Endothelial cell of umbilical vein (primary cell): ENCODE measurements at regions of chr4 and their contacts with region 1.

Region 1: GRCh38 chr4:55251342-55251741 is 94.7 kb upstream of the SRD5A3 start:
- DNase-seq: peak; percentile 35
- H3K4me3 ChIP-seq: no peak overlapping the region
- H3K27ac ChIP-seq: peak overlapping the region; percentile 24
- H3K4me1 ChIP-seq: peaks cover 41% of the 10 kb centered on the region
- H3K27me3 ChIP-seq: no peaks in the 10 kb centered on the region
- CTCF ChIP-seq: no peak
- POLR2A ChIP-seq: no peak

Region 2: GRCh38 chr4:55078987-55079386 is 172.4 kb before region 1 on chr4:
- CTCF ChIA-PET with region 1: interaction called, 4 read pairs
- POLR2A ChIA-PET with region 1: no interaction called
- dilution Hi-C with region 1: no loop called
- intact Hi-C with region 1: loop called (anchors 1 kb)
- DNase-seq: peak; percentile 92
- H3K4me3 ChIP-seq: peak overlapping the region in 1 of 3 experiments; percentile 28
- H3K27ac ChIP-seq: peak overlapping the region; percentile 99
- H3K4me1 ChIP-seq: peaks cover 48% of the 10 kb centered on the region
- H3K27me3 ChIP-seq: no peaks in the 10 kb centered on the region
- CTCF ChIP-seq: no peak
- POLR2A ChIP-seq: peak; percentile 79

Region 3: DNA sequence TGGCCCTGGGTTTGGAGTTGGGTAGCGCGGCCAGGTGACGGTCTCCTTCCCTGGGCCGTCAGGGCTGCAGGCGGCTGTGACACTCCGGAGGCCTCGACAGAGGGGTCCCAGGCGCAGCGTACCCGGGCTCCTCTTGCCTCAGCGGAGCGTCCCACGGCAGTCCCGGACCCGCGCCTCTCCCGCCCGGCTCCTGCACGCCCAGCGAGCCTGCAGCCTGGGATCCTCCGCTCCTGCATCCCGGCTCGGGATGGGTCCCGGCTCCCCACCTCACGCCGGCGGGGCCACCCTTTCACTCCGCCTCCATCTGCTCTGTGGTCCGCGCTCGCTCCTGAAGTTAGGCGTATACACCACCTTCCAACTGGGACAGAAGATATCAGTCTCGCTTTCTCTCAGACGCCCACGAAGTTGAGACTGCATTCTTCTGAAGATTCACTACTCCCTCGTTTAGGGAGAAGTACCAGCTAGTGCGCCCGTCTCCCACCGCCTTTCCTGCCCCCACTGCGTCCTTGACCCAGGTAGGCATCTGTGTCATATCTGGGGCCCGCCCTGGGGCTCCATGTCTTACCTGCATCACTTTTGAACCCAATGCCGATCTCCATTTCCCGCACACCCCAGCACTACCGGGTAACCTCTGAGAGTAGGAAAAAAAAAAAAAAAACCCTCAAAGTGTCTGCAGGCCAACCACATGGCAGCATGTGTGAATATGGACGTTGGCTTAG is 93.6 kb before region 1 on chr4:
- CTCF ChIA-PET with region 1: no interaction called
- POLR2A ChIA-PET with region 1: no interaction called
- dilution Hi-C with region 1: no loop called
- intact Hi-C with region 1: no loop called
- DNase-seq: no peak
- H3K4me3 ChIP-seq: peak overlapping the region in 2 of 3 experiments; percentile 18 to 22
- H3K27ac ChIP-seq: no peak overlapping the region
- H3K4me1 ChIP-seq: peaks cover 29% of the 10 kb centered on the region
- H3K27me3 ChIP-seq: no peaks in the 10 kb centered on the region
- CTCF ChIP-seq: no peak
- POLR2A ChIP-seq: no peak

Region 4: GRCh38 chr4:55175779-55176231 is 75.5 kb before region 1 on chr4:
- CTCF ChIA-PET with region 1: interaction called, 4 read pairs
- POLR2A ChIA-PET with region 1: no interaction called
- dilution Hi-C with region 1: no loop called
- intact Hi-C with region 1: loop called (anchors 2 kb)
- DNase-seq: peak; percentile 66
- H3K4me3 ChIP-seq: peak overlapping the region in 1 of 3 experiments; percentile 39
- H3K27ac ChIP-seq: peak overlapping the region; percentile 91
- H3K4me1 ChIP-seq: peaks cover 72% of the 10 kb centered on the region
- H3K27me3 ChIP-seq: no peaks in the 10 kb centered on the region
- CTCF ChIP-seq: no peak
- POLR2A ChIP-seq: no peak

Region 5: GRCh38 chr4:55184600-55185523 is 66.5 kb before region 1 on chr4:
- CTCF ChIA-PET with region 1: interaction called, 9 read pairs
- POLR2A ChIA-PET with region 1: interaction called, 4 read pairs
- dilution Hi-C with region 1: no loop called
- intact Hi-C with region 1: loop called (anchors 2 kb)
- DNase-seq: no peak
- H3K4me3 ChIP-seq: no peak overlapping the region
- H3K27ac ChIP-seq: peak overlapping the region; percentile 63
- H3K4me1 ChIP-seq: peaks cover 64% of the 10 kb centered on the region
- H3K27me3 ChIP-seq: no peaks in the 10 kb centered on the region
- CTCF ChIP-seq: peak in 1 of 2 donors; percentile 30
- POLR2A ChIP-seq: no peak

Region 6: DNA sequence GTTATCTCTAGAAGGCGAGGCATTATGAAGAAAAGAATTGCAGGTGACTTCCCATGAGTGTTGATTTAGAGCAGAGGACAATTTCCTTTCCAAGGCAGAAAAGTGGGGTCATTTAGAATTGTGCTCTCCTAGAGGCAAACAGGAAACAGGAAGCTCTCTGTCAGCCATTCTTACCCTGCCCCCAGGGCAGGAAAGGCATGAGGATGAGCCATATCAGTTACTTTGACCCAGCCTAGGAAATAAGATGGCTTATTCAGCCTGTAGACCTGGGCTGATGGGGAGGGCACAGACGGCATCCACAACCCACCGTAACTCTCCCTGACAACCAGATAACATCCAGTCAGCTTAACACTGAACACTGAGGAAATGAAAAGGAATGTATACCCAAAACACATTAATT is 37.2 kb before region 1 on chr4:
- CTCF ChIA-PET with region 1: interaction called, 7 read pairs
- POLR2A ChIA-PET with region 1: no interaction called
- dilution Hi-C with region 1: no loop called
- intact Hi-C with region 1: loop called (anchors 2 kb)
- DNase-seq: peak; percentile 76
- H3K4me3 ChIP-seq: no peak overlapping the region
- H3K27ac ChIP-seq: peak overlapping the region; percentile 66
- H3K4me1 ChIP-seq: peaks cover 20% of the 10 kb centered on the region
- H3K27me3 ChIP-seq: no peaks in the 10 kb centered on the region
- CTCF ChIP-seq: no peak
- POLR2A ChIP-seq: peak; percentile 42

Region 7: DNA sequence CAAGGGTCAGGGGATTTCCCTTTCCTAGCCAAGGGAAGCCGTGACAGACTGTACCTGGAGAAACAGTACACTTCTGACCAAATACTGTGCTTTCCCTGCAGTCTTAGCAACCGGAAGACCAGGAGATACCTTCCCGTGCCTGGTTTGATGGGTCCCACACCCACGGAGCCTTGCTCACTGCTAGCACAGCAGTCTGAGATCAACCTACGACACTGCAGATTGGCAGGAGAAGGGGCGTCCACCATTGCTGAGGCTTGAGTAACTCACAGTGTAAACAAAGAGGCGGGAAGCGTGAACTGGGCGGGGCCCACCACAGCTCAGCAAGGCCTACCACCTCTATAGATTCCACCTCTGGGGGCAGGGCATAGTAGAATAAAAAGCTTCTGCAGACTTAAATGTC is 46.0 kb after region 1 on chr4:
- CTCF ChIA-PET with region 1: interaction called, 3 read pairs
- POLR2A ChIA-PET with region 1: no interaction called
- dilution Hi-C with region 1: no loop called
- intact Hi-C with region 1: loop called (anchors 5 kb)
- DNase-seq: no peak
- H3K4me3 ChIP-seq: no peak overlapping the region
- H3K27ac ChIP-seq: no peak overlapping the region
- H3K4me1 ChIP-seq: peaks cover 20% of the 10 kb centered on the region
- H3K27me3 ChIP-seq: peaks cover 0 to 4% of the 10 kb centered on the region in 2 experiments
- CTCF ChIP-seq: no peak
- POLR2A ChIP-seq: no peak